ENCODE measurements at regions of chr4 and their contacts with region 1.

Region 1: GRCh38 chr4:113547487-113548042 is 214.0 kb downstream of the CAMK2D start:
- DNase-seq: peak; percentile 92
- ATAC-seq: peak; percentile 100
- H3K4me3 ChIP-seq: no peak overlapping the region
- H3K4me3 Mint-ChIP-seq: no peak overlapping the region
- H3K27ac ChIP-seq: peak overlapping the region; percentile 13 to 52
- H3K27ac Mint-ChIP-seq: peak overlapping the region; percentile 78
- H3K4me1 ChIP-seq: peaks cover 14 to 15% of the 10 kb centered on the region in 2 donors
- H3K4me1 Mint-ChIP-seq: peaks cover 22% of the 10 kb centered on the region
- H3K27me3 ChIP-seq: no peaks in the 10 kb centered on the region
- H3K27me3 Mint-ChIP-seq: no peaks in the 10 kb centered on the region
- CTCF ChIP-seq: peak; percentile 98

Region 2: GRCh38 chr4:112284662-112285411 is 1262.7 kb before region 1 on chr4:
- CTCF ChIA-PET with region 1: no interaction called
- POLR2A ChIA-PET with region 1: no interaction called
- intact Hi-C with region 1: no loop called
- DNase-seq: peak; percentile 57
- ATAC-seq: peak; percentile 15
- H3K4me3 ChIP-seq: peak overlapping the region; percentile 78 to 95 (median 89)
- H3K4me3 Mint-ChIP-seq: peak overlapping the region; percentile 97
- H3K27ac ChIP-seq: peak overlapping the region; percentile 86 to 95
- H3K27ac Mint-ChIP-seq: peak overlapping the region; percentile 94
- H3K4me1 ChIP-seq: peaks cover 67 to 75% of the 10 kb centered on the region in 2 donors
- H3K4me1 Mint-ChIP-seq: peaks cover 84% of the 10 kb centered on the region
- H3K27me3 ChIP-seq: no peaks in the 10 kb centered on the region
- H3K27me3 Mint-ChIP-seq: no peaks in the 10 kb centered on the region
- CTCF ChIP-seq: no peak

Region 3: DNA sequence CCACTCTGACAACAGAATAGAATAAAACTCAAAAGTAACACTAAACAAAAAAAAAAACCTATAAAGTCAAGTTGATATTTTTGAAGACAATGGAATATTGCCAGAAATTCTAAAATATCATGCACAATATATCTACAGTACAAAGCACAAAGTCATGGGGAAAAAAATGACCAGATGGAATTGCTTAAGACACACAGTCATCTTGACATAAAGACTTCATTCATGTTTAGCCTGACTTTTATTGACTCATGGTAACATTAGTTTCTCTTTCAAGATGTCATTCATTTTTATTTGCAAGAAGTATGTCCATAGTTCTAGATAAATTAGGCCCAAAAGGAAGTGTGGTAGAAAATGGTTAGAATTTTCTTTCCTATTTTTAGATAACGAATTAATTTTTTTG is 45.1 kb before region 1 on chr4:
- CTCF ChIA-PET with region 1: no interaction called
- POLR2A ChIA-PET with region 1: no interaction called
- intact Hi-C with region 1: no loop called
- DNase-seq: no peak
- ATAC-seq: no peak
- H3K4me3 ChIP-seq: no peak overlapping the region
- H3K4me3 Mint-ChIP-seq: no peak overlapping the region
- H3K27ac ChIP-seq: no peak overlapping the region
- H3K27ac Mint-ChIP-seq: no peak overlapping the region
- H3K4me1 ChIP-seq: no peaks in the 10 kb centered on the region
- H3K4me1 Mint-ChIP-seq: no peaks in the 10 kb centered on the region
- H3K27me3 ChIP-seq: no peaks in the 10 kb centered on the region
- H3K27me3 Mint-ChIP-seq: no peaks in the 10 kb centered on the region
- CTCF ChIP-seq: no peak

Region 4: GRCh38 chr4:113574636-113575103 is 27.1 kb after region 1 on chr4:
- CTCF ChIA-PET with region 1: interaction called, 12 read pairs
- POLR2A ChIA-PET with region 1: no interaction called
- intact Hi-C with region 1: no loop called
- DNase-seq: no peak
- ATAC-seq: no peak
- H3K4me3 ChIP-seq: no peak overlapping the region
- H3K4me3 Mint-ChIP-seq: no peak overlapping the region
- H3K27ac ChIP-seq: peak overlapping the region; percentile 34 to 59
- H3K27ac Mint-ChIP-seq: peak overlapping the region; percentile 8
- H3K4me1 ChIP-seq: peaks cover 20 to 55% of the 10 kb centered on the region in 2 donors
- H3K4me1 Mint-ChIP-seq: peaks cover 82% of the 10 kb centered on the region
- H3K27me3 ChIP-seq: no peaks in the 10 kb centered on the region
- H3K27me3 Mint-ChIP-seq: no peaks in the 10 kb centered on the region
- CTCF ChIP-seq: no peak

Region 5: GRCh38 chr4:113618205-113618604 is 70.6 kb after region 1 on chr4:
- CTCF ChIA-PET with region 1: interaction called, 14 read pairs
- POLR2A ChIA-PET with region 1: interaction called, 3 read pairs
- intact Hi-C with region 1: loop called (anchors 2 kb)
- DNase-seq: peak; percentile 25
- ATAC-seq: peak; percentile 81
- H3K4me3 ChIP-seq: peak overlapping the region in 1 of 5 experiments; percentile 18
- H3K4me3 Mint-ChIP-seq: no peak overlapping the region
- H3K27ac ChIP-seq: peak overlapping the region; percentile 43 to 75
- H3K27ac Mint-ChIP-seq: no peak overlapping the region
- H3K4me1 ChIP-seq: peaks cover 45 to 63% of the 10 kb centered on the region in 2 donors
- H3K4me1 Mint-ChIP-seq: peaks cover 51% of the 10 kb centered on the region
- H3K27me3 ChIP-seq: no peaks in the 10 kb centered on the region
- H3K27me3 Mint-ChIP-seq: no peaks in the 10 kb centered on the region
- CTCF ChIP-seq: no peak

Region 6: GRCh38 chr4:113684534-113685091 is 137.0 kb after region 1 on chr4:
- CTCF ChIA-PET with region 1: interaction called, 7 read pairs
- POLR2A ChIA-PET with region 1: no interaction called
- intact Hi-C with region 1: loop called (anchors 5 kb)
- DNase-seq: no peak
- ATAC-seq: no peak
- H3K4me3 ChIP-seq: no peak overlapping the region
- H3K4me3 Mint-ChIP-seq: no peak overlapping the region
- H3K27ac ChIP-seq: peak overlapping the region in 1 of 2 donors; percentile 83
- H3K27ac Mint-ChIP-seq: peak overlapping the region; percentile 62
- H3K4me1 ChIP-seq: peaks cover 33 to 38% of the 10 kb centered on the region in 2 donors
- H3K4me1 Mint-ChIP-seq: peaks cover 54% of the 10 kb centered on the region
- H3K27me3 ChIP-seq: no peaks in the 10 kb centered on the region
- H3K27me3 Mint-ChIP-seq: no peaks in the 10 kb centered on the region
- CTCF ChIP-seq: no peak

Region 7: DNA sequence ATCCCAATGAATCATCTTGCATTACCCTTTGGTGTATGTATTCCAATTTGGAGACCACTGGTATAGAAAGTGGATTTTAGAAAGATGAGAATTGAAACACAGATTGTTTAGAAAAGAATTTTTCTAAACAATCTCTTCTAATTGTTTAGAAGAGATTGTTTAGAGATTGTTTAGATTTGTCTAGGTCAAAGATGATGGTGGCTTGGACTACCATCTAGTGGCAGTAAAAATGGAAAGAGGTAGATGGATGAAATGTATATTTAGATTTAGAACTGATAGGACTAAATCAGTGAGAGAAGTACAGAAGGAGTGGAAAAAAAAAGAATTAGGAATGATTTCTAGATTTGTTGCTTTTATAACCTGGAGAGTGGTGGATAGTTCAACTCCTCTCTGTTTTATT is 361.3 kb after region 1 on chr4:
- CTCF ChIA-PET with region 1: interaction called, 4 read pairs
- POLR2A ChIA-PET with region 1: no interaction called
- intact Hi-C with region 1: loop called (anchors 5 kb)
- DNase-seq: peak; percentile 9
- ATAC-seq: no peak
- H3K4me3 ChIP-seq: no peak overlapping the region
- H3K4me3 Mint-ChIP-seq: no peak overlapping the region
- H3K27ac ChIP-seq: no peak overlapping the region
- H3K27ac Mint-ChIP-seq: no peak overlapping the region
- H3K4me1 ChIP-seq: no peaks in the 10 kb centered on the region
- H3K4me1 Mint-ChIP-seq: no peaks in the 10 kb centered on the region
- H3K27me3 ChIP-seq: no peaks in the 10 kb centered on the region
- H3K27me3 Mint-ChIP-seq: peaks cover 3% of the 10 kb centered on the region
- CTCF ChIP-seq: peak; percentile 18